Tibial artery (tissue), 4 donors: ENCODE measurements at regions of chr7 and their contacts with region 1.

Region 1: DNA sequence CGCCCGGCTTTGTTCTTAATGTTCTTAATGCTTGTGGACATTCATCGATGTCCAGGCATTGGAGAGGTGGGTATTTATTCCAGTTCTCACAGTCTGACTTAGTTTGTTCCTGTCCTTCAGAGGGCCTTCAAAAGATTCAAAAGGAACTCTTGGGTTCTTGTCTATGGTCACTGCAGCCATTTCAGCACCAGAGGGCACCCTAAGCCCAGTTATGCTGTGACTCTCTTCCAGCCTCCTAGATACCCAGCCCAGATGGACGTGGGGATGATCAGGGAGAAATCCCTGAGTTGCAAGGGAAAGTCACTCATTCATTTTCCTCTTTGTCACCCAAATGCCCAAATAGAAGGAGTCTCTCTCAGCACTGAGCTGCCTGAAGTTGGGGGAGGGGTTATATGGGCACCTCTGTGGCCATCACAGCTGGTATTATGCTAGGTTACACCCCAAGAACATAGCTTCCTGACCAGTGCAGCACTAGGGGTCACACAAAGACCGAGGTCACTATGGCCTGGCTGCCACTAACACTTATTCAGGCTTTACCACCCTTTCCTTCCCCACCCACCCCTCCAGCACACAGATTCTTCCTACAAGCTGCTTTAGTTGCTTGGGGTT is 26.5 kb upstream of the CCDC126 start:
- DNase-seq: peak; percentile 69 to 83
- H3K4me3 ChIP-seq: no peak overlapping the region
- H3K27ac ChIP-seq: no peak overlapping the region
- H3K4me1 ChIP-seq: no peaks in the 10 kb centered on the region
- H3K27me3 ChIP-seq: peaks cover 0 to 11% of the 10 kb centered on the region in 2 donors
- CTCF ChIP-seq: peak; percentile 75 to 88

Region 2: GRCh38 chr7:23712368-23713284 is 141.9 kb after region 1 on chr7:
- intact Hi-C with region 1: loop called (anchors 5 kb)
- DNase-seq: no peak
- H3K4me3 ChIP-seq: no peak overlapping the region
- H3K27ac ChIP-seq: no peak overlapping the region
- H3K4me1 ChIP-seq: no peaks in the 10 kb centered on the region
- H3K27me3 ChIP-seq: no peaks in the 10 kb centered on the region
- CTCF ChIP-seq: peak; percentile 55 to 80

Region 3: GRCh38 chr7:23873306-23873705 is 302.6 kb after region 1 on chr7:
- intact Hi-C with region 1: no loop called
- DNase-seq: no peak
- H3K4me3 ChIP-seq: no peak overlapping the region
- H3K27ac ChIP-seq: no peak overlapping the region
- H3K4me1 ChIP-seq: no peaks in the 10 kb centered on the region
- H3K27me3 ChIP-seq: no peaks in the 10 kb centered on the region
- CTCF ChIP-seq: no peak

Region 4: DNA sequence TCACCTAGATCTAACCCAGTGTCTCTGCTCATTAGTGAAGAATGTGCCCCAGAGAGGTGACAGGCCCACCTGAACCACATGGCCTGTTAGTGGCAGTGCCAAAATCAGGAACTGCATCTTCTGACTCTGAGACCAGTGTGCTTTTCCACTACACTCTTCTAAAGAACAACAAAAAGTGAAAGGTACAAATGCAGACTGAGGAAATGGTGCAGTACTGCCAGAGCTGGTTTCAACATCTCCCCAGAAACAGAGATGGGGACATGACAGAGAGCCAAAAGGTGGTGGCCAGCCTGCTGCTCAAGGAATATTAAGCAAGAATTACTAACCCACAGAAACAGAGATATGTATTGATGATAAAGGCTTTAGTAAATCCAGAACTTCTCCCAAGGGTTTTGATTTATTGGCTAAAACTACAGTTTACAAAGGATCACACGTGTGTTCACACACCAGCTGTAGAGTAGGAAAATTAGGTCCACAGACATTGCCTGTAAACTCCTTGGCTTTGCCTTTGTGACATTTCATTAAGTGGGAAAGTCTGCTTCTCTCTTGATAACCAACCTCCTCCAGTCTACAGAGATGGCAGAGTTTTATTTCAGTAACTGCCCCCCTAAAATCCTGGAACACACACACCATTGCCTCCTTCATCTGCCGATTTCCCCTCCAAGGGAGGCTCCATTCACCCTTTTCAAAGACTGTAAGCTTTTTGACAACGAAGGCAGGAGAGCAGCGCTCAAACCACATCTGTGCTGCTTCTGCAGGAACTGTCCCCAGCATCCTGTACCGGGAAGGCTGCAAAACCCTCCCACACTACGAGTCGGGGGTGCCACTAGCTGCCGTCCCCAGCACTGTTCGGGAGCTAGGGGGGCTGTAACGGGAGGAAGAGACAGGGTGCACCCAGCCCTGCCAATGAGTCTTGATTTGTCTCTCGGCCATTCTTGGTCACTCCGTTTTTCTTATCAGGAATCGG is 1156.7 kb after region 1 on chr7:
- intact Hi-C with region 1: loop called (anchors 5 kb)
- DNase-seq: peak; percentile 68 to 77
- H3K4me3 ChIP-seq: no peak overlapping the region
- H3K27ac ChIP-seq: no peak overlapping the region
- H3K4me1 ChIP-seq: peaks cover 0 to 7% (median 0%) of the 10 kb centered on the region in 4 donors
- H3K27me3 ChIP-seq: no peaks in the 10 kb centered on the region
- CTCF ChIP-seq: no peak